GM13976 (cell line): ENCODE measurements at regions of chr15 and their contacts with region 1.

Region 1: DNA sequence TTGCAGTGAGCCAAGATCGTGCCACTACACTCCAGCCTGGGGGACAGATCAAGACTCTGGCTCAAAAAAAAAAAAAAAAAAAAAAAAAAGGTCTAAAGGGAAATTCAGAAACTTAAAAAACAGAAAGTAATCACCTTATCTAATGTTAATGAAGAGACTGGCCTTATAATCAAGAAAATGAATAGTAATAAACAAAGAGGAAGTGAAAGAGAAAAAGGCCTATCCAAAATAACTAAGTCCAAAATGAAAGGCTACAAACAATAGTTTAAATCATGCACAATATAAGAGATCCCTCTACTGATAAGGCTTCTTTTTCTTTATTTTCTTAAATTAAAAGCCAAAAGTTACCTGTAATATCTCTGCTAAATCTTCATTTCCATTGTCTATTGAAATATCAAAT is 37.1 kb upstream of the HDC start:
- DNase-seq: peak; percentile 40
- CTCF ChIP-seq: no peak

Region 2: DNA sequence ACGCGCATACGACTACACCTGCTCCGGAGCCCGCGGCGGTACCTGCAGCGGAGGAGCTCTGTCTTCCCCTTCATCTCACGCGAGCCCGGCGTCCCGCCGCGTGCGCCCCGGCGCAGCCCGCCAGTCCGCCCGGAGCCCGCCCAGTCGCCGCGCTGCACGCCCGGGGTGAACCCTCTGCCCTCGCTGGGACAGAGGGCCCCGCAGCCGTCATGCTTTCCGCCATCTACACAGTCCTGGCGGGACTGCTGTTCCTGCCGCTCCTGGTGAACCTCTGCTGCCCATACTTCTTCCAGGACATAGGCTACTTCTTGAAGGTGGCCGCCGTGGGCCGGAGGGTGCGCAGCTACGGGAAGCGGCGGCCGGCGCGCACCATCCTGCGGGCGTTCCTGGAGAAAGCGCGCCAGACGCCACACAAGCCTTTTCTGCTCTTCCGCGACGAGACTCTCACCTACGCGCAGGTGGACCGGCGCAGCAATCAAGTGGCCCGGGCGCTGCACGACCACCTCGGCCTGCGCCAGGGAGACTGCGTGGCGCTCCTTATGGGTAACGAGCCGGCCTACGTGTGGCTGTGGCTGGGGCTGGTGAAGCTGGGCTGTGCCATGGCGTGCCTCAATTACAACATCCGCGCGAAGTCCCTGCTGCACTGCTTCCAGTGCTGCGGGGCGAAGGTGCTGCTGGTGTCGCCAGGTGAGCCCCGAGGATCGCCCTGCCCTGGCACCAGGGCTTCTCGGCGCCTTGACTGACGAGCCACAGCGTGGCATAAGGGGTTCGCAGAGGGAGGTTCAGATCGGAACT is 120.2 kb before region 1 on chr15:
- in situ Hi-C with region 1: loop called (anchors 10 kb)
- DNase-seq: peak; percentile 80
- CTCF ChIP-seq: no peak

Region 3: GRCh38 chr15:50496692-50497091 is 194.1 kb after region 1 on chr15:
- in situ Hi-C with region 1: no loop called
- DNase-seq: no peak
- CTCF ChIP-seq: no peak